Heart right ventricle (tissue), 16 donors: ENCODE measurements at regions of chr10 and their contacts with region 1.

Region 1: DNA sequence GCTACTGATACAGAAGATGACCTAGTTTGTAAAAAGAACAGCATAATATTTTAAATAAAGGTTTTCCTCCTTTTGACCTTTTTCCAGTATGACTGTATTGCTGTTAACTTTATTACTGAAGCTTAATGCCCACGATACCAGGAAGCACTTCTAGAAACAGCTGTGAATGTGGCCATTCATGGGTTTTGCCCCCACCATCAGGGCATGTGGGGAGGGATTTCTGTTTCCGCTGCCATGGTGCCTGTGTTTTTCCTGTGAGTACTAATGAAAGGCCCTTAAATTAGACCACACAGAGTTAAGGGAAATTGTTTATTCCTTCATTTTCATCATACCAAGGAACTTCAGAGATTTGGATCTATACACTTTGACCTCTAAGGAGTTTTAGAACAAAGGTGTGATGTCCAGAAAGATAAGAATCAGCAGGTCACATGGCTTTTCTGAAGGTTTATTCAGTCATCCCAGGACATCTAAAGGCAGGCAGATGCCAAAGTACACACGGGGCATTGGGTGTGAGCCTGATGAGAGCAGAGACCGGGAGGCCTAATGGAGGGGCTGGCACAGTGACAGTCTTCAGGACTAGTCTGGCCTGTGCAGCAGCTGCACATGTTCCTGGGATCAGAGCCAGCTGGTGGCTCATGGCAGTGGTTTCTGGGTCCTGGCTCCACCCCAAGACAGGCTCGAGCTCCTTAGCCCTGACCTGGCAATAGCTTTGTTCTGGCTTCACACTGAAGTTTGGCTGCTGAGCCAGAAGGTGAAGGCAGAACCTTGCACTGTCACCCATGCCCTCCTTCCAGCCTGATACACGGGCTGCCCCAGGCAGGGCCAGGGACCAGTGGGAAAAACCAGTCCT is 190.9 kb downstream of the REEP3 start:
- DNase-seq: peak; percentile 90 to 94
- ATAC-seq: peak; percentile 90 to 97 (median 93)
- H3K4me3 ChIP-seq: no peak overlapping the region
- H3K27ac ChIP-seq: peak overlapping the region; percentile 76 to 93 (median 82)
- H3K4me1 ChIP-seq: peaks cover 15 to 78% (median 55%) of the 10 kb centered on the region in 9 donors
- H3K27me3 ChIP-seq: no peaks in the 10 kb centered on the region
- CTCF ChIP-seq: no peak

Region 2: DNA sequence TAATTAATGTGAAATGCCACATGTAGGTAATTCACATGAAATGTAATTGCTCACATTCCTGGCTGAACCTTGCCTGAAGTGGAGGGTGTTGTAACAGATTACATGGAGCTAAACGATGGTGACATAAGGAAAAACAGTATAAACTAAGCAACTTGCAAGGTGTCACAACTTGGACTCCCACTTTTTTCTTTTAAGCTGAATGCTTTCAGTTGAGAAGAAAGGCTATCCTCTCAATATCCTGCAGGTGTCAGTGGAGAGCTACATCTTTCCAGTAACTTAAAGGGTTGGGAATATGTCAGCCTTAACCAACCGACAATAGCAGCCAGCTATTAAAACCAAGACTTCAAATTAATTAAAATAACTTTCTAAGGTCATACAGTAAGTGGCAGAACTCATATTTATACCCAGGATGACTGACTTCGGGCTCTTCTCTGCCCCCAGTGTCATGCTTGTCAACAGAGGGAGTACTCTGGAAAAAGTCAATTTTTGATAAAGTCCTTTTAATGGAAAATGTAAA is 545.3 kb before region 1 on chr10:
- intact Hi-C with region 1: loop called in 5 of 10 experiments (anchors 5 kb)
- DNase-seq: peak in 1 of 2 donors; percentile 61
- ATAC-seq: peak in 7 of 8 donors; percentile 56 to 71 (median 66)
- H3K4me3 ChIP-seq: no peak overlapping the region
- H3K27ac ChIP-seq: no peak overlapping the region
- H3K4me1 ChIP-seq: peaks cover 0 to 39% (median 20%) of the 10 kb centered on the region in 9 donors
- H3K27me3 ChIP-seq: no peaks in the 10 kb centered on the region
- CTCF ChIP-seq: peak; percentile 41 to 91 (median 87)

Region 3: GRCh38 chr10:63217120-63217605 is 494.9 kb before region 1 on chr10:
- intact Hi-C with region 1: loop called in 2 of 10 experiments (anchors 5 kb)
- DNase-seq: peak in 1 of 2 donors; percentile 30
- ATAC-seq: peak; percentile 62 to 82 (median 77)
- H3K4me3 ChIP-seq: no peak overlapping the region
- H3K27ac ChIP-seq: peak overlapping the region in 4 of 10 donors; percentile 1 to 40 (median 14)
- H3K4me1 ChIP-seq: peaks cover 0 to 63% (median 43%) of the 10 kb centered on the region in 9 donors
- H3K27me3 ChIP-seq: no peaks in the 10 kb centered on the region
- CTCF ChIP-seq: peak; percentile 46 to 86 (median 70)

Region 4: DNA sequence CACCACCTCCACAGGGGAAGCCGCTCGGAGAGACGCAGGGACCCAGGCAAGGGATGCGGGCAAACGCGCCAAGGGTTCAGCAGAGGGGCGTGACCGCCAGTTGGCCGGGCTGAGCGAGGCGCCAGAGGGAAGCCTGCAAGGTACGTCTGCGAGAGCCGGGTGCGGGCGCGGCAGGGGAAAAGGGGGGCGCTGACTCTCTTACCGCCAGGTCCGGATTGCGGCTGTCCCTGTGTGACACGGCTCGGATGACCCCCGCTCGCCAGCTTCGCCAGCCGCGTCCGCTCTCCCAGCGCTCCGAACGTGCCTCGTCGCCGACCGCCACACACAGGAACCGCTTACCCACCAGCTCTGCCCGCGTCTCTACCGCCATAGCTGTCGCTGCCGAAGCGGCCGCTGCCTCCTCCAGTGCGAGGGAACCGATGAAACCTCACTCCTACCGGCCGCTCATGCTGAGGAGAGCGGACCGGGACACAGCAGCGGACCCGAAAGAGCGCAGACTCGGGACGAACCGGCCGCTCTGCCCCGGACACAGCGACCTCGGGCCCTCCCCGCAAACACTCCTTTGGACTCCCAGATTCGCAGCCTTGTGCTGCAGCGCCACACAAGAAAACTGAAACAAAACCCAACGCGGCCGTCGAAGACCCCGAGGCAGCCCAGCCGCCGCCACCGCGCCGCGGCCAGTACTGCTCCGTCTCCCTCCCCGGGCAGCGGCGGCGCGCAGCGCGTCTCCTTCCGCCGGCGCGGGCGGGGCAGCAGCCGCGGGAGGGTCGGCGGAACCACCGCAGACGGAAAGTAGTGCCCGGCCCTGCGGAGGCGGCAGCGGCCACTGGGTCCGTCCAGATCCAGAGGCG is 246.6 kb before region 1 on chr10 and contains the start of gene JMJD1C:
- intact Hi-C with region 1: loop called in 4 of 10 experiments (anchors 5 to 10 kb)
- DNase-seq: peak; percentile 76 to 84
- ATAC-seq: peak; percentile 91 to 97 (median 94)
- H3K4me3 ChIP-seq: peak within 1 kb of the TSS; percentile 77 to 86 (median 84)
- H3K27ac ChIP-seq: peak within 1 kb of the TSS; percentile 73 to 97 (median 93)
- H3K4me1 ChIP-seq: peaks cover 0 to 40% (median 28%) of the 10 kb centered on the region in 9 donors
- H3K27me3 ChIP-seq: no peaks in the 10 kb centered on the region
- CTCF ChIP-seq: peak in 1 of 9 donors; percentile 9
- total RNA-seq, gene JMJD1C: 30.9 to 51.9 (median 39.2) TPM

Region 5: DNA sequence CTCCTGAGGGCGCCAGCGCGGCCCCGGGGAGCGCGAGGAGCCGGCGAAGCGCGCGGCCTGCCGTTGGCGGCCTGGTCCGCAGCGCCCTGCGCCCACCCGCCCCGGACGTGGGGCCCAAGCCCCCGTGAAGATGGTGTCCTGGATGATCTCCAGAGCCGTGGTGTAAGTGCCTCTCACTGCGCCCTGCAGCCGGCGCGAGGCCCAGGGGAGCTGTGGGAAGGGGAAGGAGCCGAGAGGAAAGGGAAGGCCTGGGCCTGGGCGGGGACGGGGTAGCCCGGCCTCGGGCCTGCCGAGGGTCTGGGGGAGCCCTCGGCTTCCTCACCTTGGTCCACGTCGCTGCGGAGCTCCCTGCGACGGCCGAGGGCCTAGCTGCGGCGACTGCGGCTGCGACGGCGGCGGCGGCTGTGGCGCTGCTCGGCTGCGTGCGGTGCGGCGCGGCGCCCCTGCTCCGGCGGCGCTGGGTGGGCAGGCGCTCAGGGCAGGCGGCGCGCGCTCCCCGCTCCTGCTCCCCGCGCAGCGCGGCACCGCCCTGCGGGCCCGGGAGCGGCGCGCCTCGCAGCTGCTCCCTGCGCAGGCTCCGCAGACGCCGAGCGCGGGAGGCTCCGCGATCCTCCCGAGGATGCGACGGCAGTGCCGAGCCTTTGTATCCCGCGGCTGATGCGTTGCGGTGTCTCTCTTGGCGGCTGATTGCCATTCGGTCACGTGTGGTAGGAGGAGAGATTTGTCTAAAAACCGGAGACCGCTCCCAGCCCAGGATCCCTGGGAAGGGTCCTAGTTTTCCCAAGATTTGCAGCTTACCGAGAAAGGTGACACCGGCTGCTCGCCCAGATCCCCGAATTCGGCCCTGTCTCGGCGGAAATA is 190.4 kb before region 1 on chr10:
- intact Hi-C with region 1: loop called in 5 of 10 experiments (anchors 5 to 10 kb)
- DNase-seq: peak; percentile 68 to 72
- ATAC-seq: peak; percentile 70 to 91 (median 86)
- H3K4me3 ChIP-seq: peak overlapping the region; percentile 51 to 91 (median 80)
- H3K27ac ChIP-seq: peak overlapping the region; percentile 97 to 99 (median 99)
- H3K4me1 ChIP-seq: peaks cover 0 to 80% (median 58%) of the 10 kb centered on the region in 9 donors
- H3K27me3 ChIP-seq: no peaks in the 10 kb centered on the region
- CTCF ChIP-seq: no peak

Region 6: GRCh38 chr10:64101606-64102263 is 389.6 kb after region 1 on chr10:
- intact Hi-C with region 1: no loop called
- DNase-seq: no peak
- ATAC-seq: no peak
- H3K4me3 ChIP-seq: no peak overlapping the region
- H3K27ac ChIP-seq: no peak overlapping the region
- H3K4me1 ChIP-seq: no peaks in the 10 kb centered on the region
- H3K27me3 ChIP-seq: no peaks in the 10 kb centered on the region
- CTCF ChIP-seq: no peak

Region 7: DNA sequence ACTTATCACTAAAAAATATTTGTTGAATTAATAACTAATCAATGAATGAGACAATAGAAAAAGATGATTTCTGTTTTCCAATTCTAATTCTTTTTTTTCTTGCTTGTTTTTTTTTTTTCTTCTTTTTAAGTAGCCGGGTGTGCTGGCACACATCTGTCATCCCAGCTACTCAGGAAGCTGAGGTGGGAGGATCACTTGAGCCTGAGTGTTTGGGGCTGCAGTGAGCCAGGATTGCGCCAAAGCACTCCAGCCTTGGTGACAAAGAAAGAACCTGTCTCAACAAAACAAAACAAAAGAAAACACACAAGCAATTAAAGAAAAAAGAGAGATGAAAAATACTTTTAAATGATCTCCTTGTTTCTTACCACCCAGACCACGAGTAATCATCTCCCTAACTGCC is 918.4 kb after region 1 on chr10:
- intact Hi-C with region 1: no loop called
- DNase-seq: no peak
- ATAC-seq: no peak
- H3K4me3 ChIP-seq: no peak overlapping the region
- H3K27ac ChIP-seq: no peak overlapping the region
- H3K4me1 ChIP-seq: no peaks in the 10 kb centered on the region
- H3K27me3 ChIP-seq: no peaks in the 10 kb centered on the region
- CTCF ChIP-seq: no peak